CD14-positive monocyte (primary cell): ENCODE measurements at regions of chr12 and their contacts with region 1.

Region 1: DNA sequence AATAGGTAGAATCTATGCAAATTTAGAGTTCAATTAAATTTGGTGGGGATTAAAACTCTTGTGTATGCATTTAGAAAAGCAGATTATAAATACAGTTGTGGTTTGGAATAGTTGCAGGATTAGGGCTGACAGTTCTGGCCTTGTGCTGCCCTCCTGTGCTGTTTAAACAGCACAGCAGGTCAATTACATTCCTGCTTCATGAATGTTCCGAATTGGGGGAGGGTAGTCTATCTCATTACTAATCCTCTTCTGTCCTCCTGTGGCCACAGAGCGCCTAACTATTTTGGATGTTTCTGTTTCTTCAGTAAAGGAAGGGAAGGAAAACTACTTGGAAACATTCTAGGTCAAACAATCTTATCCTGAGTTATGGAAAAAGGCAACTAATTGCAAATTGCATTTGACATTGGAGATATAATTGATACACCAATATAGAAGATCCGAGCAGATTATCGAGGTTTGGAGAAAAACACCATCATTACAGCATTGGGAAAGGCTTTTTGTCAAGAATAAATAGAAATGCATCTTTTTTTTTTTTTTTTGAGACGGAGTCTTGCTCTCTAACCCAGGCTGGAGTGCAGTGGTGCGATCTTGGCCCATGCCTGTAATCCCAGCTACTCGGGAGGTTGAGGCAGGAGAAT is 8.7 kb upstream of the GPR19 start:
- DNase-seq: peak; percentile 76 to 80 (median 79)
- H3K4me3 ChIP-seq: no peak overlapping the region
- H3K4me3 Mint-ChIP-seq: no peak overlapping the region
- H3K27ac ChIP-seq: no peak overlapping the region
- H3K27ac Mint-ChIP-seq: peak overlapping the region in 1 of 7 donors; percentile 28
- H3K4me1 ChIP-seq: peaks cover 18 to 22% of the 10 kb centered on the region in 2 donors
- H3K4me1 Mint-ChIP-seq: peaks cover 15% of the 10 kb centered on the region
- H3K27me3 ChIP-seq: no peaks in the 10 kb centered on the region
- H3K27me3 Mint-ChIP-seq: no peaks in the 10 kb centered on the region
- CTCF ChIP-seq: peak; percentile 92

Region 2: DNA sequence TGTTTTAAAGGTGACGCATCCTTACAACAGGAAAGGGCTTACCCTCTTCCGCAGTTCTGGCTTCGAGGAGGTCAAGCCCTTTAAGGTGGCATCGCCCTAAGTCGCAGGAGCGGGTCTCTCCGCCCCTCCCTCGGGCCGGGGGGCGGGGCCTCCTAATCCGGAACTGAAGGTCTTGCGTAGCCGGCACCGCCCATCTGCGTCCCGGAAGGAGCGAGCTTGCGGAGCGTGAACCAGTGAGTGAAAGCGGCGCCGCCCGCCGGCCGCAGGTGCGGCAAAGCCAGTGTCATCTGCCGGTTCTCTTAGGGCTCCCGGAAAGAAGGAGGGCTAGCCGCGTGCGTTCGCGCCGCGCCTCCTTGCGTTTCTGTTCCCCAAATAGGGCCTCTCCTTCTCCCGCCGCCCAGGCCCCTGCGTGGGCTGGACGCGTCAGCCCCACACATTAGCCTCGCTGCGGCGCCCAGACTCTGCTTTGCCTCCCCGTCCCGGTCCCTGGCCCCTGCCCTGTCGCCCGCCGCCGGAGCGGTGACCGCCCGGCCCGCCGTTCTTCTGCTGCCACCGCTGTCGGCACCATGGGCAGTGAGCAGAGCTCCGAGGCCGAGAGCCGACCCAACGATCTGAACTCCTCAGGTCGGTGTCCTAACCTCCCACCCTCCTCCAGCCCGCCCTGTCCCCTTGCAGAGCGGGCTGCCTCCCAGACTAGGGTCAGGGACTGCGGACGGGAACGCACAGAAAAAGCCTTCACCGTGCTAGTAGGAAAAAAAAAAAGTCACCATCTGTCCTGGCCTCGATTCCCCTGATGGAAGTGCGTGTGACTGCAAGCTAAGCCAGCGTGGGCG is 347.6 kb before region 1 on chr12 and contains the start of gene BORCS5:
- intact Hi-C with region 1: loop called in 1 of 2 experiments (anchors 5 kb)
- DNase-seq: peak; percentile 97 to 98 (median 98)
- H3K4me3 ChIP-seq: peak within 1 kb of the TSS; percentile 67 to 84 (median 76)
- H3K4me3 Mint-ChIP-seq: peak within 1 kb of the TSS; percentile 90 to 96
- H3K27ac ChIP-seq: peak within 1 kb of the TSS; percentile 90 to 96
- H3K27ac Mint-ChIP-seq: peak within 1 kb of the TSS; percentile 97 to 99 (median 98)
- H3K4me1 ChIP-seq: peaks cover 18 to 24% of the 10 kb centered on the region in 2 donors
- H3K4me1 Mint-ChIP-seq: peaks cover 30% of the 10 kb centered on the region
- H3K27me3 ChIP-seq: no peaks in the 10 kb centered on the region
- H3K27me3 Mint-ChIP-seq: peaks cover 0 to 5% (median 3%) of the 10 kb centered on the region in 3 donors
- CTCF ChIP-seq: no peak
- polyA plus RNA-seq, gene BORCS5: 8.5 to 15.1 (median 9.6) TPM

Region 3: DNA sequence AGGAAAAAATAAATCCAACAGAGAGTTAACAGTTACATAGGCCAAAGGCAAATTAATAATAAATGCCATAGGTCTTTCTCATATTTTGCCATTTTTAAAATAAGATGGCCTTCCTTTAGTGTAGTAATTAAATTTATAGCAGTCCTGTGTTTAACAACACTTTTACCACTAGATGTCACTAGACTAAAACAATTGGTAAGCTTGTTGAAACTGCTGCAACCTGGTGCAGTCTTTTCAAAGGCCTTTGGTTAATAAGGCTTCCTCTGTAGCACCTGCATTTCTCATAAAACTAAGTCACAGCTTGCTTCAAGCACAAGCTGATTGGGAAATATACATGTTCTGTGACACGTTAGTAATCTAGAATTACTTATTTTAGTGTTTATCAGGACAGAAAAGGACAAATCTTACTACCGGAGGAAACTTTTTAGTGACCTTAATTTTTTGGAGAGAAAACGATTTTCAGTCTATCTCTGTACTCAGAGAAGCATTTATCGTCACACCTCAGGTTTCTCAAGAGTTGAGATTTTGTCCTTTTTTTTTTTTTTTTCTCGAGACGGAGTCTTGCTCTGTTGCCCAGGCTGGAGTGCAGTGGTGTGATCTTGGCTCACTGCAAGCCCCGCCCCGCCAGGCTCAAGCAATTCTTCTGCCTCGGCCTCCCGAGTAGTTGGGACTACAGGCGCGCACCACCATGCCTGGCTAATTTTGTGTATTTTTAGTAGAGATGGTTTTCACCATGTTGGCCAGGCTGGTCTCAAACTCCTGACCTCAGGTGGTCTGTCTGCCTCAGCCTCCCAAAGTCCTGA is 327.9 kb before region 1 on chr12:
- intact Hi-C with region 1: loop called (anchors 5 to 10 kb)
- DNase-seq: peak; percentile 56 to 88 (median 69)
- H3K4me3 ChIP-seq: no peak overlapping the region
- H3K4me3 Mint-ChIP-seq: no peak overlapping the region
- H3K27ac ChIP-seq: no peak overlapping the region
- H3K27ac Mint-ChIP-seq: peak overlapping the region in 3 of 7 donors; percentile 78 to 82 (median 80)
- H3K4me1 ChIP-seq: peaks cover 16 to 22% of the 10 kb centered on the region in 2 donors
- H3K4me1 Mint-ChIP-seq: peaks cover 23% of the 10 kb centered on the region
- H3K27me3 ChIP-seq: no peaks in the 10 kb centered on the region
- H3K27me3 Mint-ChIP-seq: peaks cover 0 to 2% (median 0%) of the 10 kb centered on the region in 3 donors
- CTCF ChIP-seq: peak; percentile 74

Region 4: DNA sequence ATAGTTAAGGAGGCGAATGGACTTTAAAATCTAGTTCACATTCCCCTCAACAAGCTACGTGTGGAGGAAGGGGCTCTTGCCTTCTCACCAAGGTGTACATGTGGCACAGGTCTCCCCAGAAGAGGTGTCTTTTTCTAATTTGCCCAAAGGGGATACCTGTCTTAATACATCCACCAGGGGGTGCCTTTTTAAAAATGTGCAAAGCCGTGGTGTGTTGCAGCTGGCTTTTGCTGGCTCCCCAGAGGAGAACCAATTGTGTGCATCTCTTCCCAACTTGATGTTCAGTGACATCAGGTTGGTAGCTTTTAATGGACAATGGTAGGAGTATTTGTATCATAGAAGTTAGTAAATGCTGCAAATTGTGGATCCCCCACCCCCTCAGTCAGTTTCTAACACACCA is 59.2 kb before region 1 on chr12:
- intact Hi-C with region 1: loop called in 1 of 2 experiments (anchors 10 kb)
- DNase-seq: peak; percentile 15 to 25 (median 20)
- H3K4me3 ChIP-seq: no peak overlapping the region
- H3K4me3 Mint-ChIP-seq: no peak overlapping the region
- H3K27ac ChIP-seq: no peak overlapping the region
- H3K27ac Mint-ChIP-seq: no peak overlapping the region
- H3K4me1 ChIP-seq: no peaks in the 10 kb centered on the region
- H3K4me1 Mint-ChIP-seq: no peaks in the 10 kb centered on the region
- H3K27me3 ChIP-seq: no peaks in the 10 kb centered on the region
- H3K27me3 Mint-ChIP-seq: peaks cover 0 to 1% (median 0%) of the 10 kb centered on the region in 3 donors
- CTCF ChIP-seq: peak; percentile 57

Region 5: GRCh38 chr12:13196130-13196921 is 491.6 kb after region 1 on chr12 and contains the start of gene EMP1:
- intact Hi-C with region 1: no loop called
- DNase-seq: peak; percentile 85 to 96 (median 92)
- H3K4me3 ChIP-seq: peak within 1 kb of the TSS; percentile 19 to 73 (median 39)
- H3K4me3 Mint-ChIP-seq: peak within 1 kb of the TSS; percentile 84 to 89
- H3K27ac ChIP-seq: peak within 1 kb of the TSS in 1 of 2 donors; percentile 66
- H3K27ac Mint-ChIP-seq: peak within 1 kb of the TSS; percentile 54 to 91 (median 78)
- H3K4me1 ChIP-seq: peaks cover 45% of the 10 kb centered on the region in 2 donors
- H3K4me1 Mint-ChIP-seq: peaks cover 61% of the 10 kb centered on the region
- H3K27me3 ChIP-seq: no peaks in the 10 kb centered on the region
- H3K27me3 Mint-ChIP-seq: peaks cover 4 to 9% (median 6%) of the 10 kb centered on the region in 3 donors
- CTCF ChIP-seq: no peak
- polyA plus RNA-seq, gene EMP1: 2.7 to 6.3 (median 3.1) TPM